GM12878 (cell line): ENCODE measurements at regions of chr1 and their contacts with region 1.

Region 1: GRCh38 chr1:154791292-154792166 is 78.6 kb downstream of the KCNN3 start:
- DNase-seq: peak; percentile 88
- ATAC-seq: peak; percentile 97
- H3K4me3 ChIP-seq: peak overlapping the region; percentile 49; the same call in 1 of the 2 replicates
- H3K27ac ChIP-seq: peak overlapping the region; percentile 59
- H3K4me1 ChIP-seq: peaks cover 39% of the 10 kb centered on the region
- H3K27me3 ChIP-seq: no peaks in the 10 kb centered on the region
- CTCF ChIP-seq: peak; percentile 39 to 41 (median 40)
- EP300 ChIP-seq: peak; percentile 76 to 77
- POLR2A ChIP-seq: no peak
- RAD21 ChIP-seq: peak; percentile 48

Region 2: GRCh38 chr1:154767315-154768240 is 24.0 kb before region 1 on chr1:
- CTCF ChIA-PET with region 1: interaction called, 10 read pairs
- POLR2A ChIA-PET with region 1: no interaction called
- RAD21 ChIA-PET with region 1: interaction called, 6 read pairs
- SMC1A ChIA-PET with region 1: interaction called, 4 read pairs
- in situ Hi-C with region 1: no loop called
- intact Hi-C with region 1: no loop called
- DNase-seq: no peak
- ATAC-seq: no peak
- H3K4me3 ChIP-seq: no peak overlapping the region
- H3K27ac ChIP-seq: no peak overlapping the region
- H3K4me1 ChIP-seq: peaks cover 11% of the 10 kb centered on the region
- H3K27me3 ChIP-seq: no peaks in the 10 kb centered on the region
- CTCF ChIP-seq: no peak
- EP300 ChIP-seq: no peak
- POLR2A ChIP-seq: no peak
- RAD21 ChIP-seq: no peak

Region 3: DNA sequence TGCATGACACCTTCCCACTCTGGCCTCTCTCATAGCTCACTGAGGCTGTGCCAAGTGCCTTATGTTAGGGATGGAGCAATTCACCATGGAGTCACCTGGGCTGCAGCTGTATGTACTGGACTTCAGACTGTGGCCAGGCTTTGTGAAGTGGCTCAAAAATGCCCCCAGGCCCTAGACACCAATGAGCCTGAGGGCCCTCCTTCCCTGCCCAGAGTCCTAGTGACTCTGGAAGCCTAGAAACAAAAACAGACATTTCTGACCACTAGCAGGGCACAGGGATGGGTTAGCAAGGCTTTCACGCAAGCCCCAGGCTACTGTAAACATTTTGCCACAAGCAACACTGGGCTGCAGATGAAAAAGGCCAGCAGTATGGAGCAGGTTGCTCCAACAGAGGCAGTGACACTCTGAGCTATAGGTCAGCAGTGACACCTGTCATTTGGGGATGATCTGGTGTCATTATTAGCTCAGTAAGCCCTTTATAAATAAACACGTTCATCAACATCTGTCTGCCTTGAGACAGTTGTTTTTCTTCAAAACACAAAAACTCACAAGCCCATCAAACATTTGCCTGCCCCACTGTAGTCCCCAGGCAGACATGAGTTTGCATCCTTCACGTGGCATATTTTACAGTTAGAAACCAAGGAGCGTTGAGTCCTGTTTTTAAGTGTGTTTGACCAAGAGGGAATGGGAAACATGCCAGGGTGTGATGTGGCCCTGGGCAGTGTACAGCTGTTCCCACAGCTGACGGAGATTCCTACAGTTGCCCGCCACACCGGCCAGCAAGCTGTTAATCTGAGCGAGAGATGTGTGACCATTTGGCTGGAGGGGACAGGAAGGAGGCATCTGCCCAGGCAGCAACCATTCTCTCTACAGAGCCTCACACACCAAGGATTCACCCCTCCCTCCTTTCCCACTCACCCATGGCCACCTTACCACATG is 11.7 kb after region 1 on chr1:
- CTCF ChIA-PET with region 1: interaction called, 17 read pairs
- POLR2A ChIA-PET with region 1: interaction called, 15 read pairs
- RAD21 ChIA-PET with region 1: interaction called, 46 read pairs
- SMC1A ChIA-PET with region 1: interaction called, 75 read pairs
- in situ Hi-C with region 1: no loop called
- intact Hi-C with region 1: no loop called
- DNase-seq: no peak
- ATAC-seq: no peak
- H3K4me3 ChIP-seq: no peak overlapping the region
- H3K27ac ChIP-seq: no peak overlapping the region
- H3K4me1 ChIP-seq: peaks cover 25% of the 10 kb centered on the region
- H3K27me3 ChIP-seq: no peaks in the 10 kb centered on the region
- CTCF ChIP-seq: no peak
- EP300 ChIP-seq: no peak
- POLR2A ChIP-seq: no peak
- RAD21 ChIP-seq: no peak

Region 4: DNA sequence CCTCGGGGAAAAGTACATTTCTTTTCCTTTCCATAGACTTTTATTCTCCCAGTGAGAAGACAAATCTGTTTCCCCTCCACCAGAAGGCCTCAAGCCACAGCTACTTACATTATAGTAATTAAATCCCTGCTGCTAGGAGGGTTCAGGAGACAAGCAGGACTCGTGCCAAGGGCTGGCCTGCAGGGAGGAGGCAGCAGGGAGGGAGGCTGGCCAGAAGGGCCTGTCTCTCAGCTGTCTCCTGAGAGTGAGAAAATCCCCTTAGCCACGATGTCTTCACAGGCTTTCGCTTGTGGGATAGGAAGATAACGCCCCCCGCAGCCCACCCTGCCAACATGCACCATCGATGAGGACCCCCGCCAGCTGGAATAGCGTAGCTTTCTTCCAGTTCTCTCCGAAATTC is 64.5 kb after region 1 on chr1:
- CTCF ChIA-PET with region 1: interaction called, 7 read pairs
- POLR2A ChIA-PET with region 1: interaction called, 6 read pairs
- RAD21 ChIA-PET with region 1: interaction called, 12 read pairs
- SMC1A ChIA-PET with region 1: interaction called, 26 read pairs
- in situ Hi-C with region 1: no loop called
- intact Hi-C with region 1: no loop called
- DNase-seq: no peak
- ATAC-seq: no peak
- H3K4me3 ChIP-seq: peak overlapping the region; percentile 84; the same call in 1 of the 2 replicates
- H3K27ac ChIP-seq: peak overlapping the region; percentile 79; the same call in 1 of the 2 replicates
- H3K4me1 ChIP-seq: peaks cover 40% of the 10 kb centered on the region
- H3K27me3 ChIP-seq: no peaks in the 10 kb centered on the region
- CTCF ChIP-seq: no peak; a peak in 1 of 6 replicates
- EP300 ChIP-seq: no peak
- POLR2A ChIP-seq: no peak
- RAD21 ChIP-seq: 0 out of 2 replicates have a peak, but pooled peaks have one; percentile 17